ENCODE measurements at regions of chr3 and their contacts with region 1.

Region 1: DNA sequence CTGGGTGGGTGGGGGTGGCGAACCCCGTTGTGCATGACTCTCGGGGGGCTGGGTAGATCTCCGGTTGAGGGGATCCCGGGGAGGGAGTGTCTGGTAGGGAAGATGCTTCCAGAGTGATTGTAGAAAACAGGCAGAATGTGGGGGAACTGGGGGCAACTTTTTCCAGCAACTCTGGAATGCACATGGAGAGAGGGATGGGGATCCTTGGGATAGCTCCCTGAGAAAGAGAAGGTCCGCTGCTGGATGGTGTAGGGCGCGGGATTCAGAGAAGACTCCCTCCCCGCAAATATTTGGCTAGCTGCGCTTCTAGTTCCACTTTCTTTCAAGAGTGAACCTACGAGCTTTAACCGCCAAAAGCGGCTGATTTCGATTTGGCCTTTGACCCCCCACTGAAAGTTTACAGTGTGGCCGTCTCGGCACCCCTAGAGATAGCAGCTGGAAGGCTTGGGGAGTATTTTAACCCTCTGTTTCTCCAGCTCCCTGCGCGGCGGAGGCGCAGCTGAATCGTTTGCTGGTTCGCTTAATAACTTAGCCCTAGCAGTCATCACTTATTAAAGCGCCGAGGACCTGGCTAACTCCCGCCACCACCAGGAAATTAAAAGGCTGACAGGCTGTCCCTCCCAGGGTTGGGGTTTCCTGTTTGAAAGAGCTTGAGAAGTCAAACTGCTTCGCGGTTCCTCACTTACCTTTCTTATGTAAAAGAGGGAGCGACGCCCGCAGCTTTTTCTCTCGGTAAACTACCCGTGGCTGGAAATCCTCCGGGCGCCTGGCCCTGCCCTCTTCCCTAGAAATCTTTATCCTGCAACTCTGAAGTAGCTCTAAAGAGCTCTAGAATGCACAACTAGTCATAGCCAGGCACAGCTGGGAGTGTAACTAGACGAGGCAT is 1.2 kb downstream of the PHLDB2 start:
- DNase-seq: peak; percentile 86 to 96 (median 90)
- H3K4me3 ChIP-seq: peak overlapping the region; percentile 81 to 85 (median 84)
- H3K27ac ChIP-seq: peak overlapping the region; percentile 93 to 97
- H3K4me1 ChIP-seq: peaks cover 0 to 30% (median 15%) of the 10 kb centered on the region in 3 donors
- H3K27me3 ChIP-seq: no peaks in the 10 kb centered on the region
- CTCF ChIP-seq: peak; percentile 48

Region 2: DNA sequence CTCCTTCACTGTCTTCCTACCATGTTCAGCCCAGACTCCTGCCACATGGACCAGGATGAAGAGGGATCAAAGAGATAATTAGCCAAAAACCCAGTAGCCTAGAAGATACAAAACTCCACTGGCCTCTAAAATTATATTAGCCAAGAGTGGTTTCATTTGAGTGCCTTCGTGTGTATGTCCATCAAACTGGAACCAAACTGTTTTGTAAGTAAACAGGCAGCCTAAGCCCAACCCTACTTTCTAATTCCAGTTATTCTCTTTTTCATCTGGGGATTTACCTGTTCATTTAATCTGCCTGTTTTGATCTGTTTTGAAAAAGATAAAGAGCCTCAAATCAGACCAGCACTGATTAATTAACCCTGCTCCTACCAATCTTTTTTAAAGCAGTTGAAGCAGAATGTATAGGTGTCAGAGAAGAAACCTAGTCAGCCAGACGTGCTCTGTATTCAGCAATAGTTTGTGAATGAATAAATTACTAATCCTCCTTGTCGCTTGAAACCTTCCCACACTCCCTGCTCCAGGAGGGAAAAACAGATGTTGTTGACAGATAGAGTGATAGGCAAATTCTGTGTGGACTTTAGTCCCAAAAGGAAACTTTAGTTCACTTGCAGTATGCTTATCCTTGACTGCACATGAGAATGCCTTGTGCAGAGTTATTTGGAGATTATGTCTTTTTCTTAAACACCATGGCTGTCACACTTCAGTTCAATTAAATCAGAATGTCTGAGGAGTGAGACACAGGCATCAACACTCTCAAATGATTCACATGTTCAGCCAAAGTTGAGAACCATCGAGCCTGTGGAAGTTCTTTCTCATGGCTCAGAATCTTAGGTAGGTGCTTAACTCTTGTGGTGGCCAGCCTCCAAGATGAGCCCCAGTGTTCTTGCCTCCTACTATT is 209.6 kb before region 1 on chr3:
- intact Hi-C with region 1: no loop called
- DNase-seq: peak in 2 of 5 donors; percentile 13 to 15
- H3K4me3 ChIP-seq: no peak overlapping the region
- H3K27ac ChIP-seq: no peak overlapping the region
- H3K4me1 ChIP-seq: peaks cover 0 to 5% (median 0%) of the 10 kb centered on the region in 3 donors
- H3K27me3 ChIP-seq: no peaks in the 10 kb centered on the region
- CTCF ChIP-seq: no peak

Region 3: DNA sequence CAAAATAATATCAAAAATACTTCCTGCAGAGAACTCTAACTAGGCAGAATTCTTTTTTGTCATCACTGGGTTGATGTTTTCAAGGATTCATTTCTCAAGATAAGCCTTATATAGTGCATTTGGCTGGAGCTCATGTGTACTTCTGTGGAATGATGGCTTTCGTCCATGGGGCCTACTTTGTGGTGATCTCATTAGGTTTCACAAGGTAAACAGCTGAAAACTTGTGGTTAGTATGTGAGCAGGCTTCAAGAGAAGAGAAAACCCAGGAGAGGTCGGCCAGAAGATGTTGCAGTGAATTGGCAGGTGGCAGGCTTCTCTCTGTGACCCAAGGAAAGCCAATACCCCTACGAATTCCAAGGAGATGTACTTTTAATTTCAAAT is 122.5 kb before region 1 on chr3:
- intact Hi-C with region 1: loop called (anchors 10 kb)
- DNase-seq: no peak
- H3K4me3 ChIP-seq: no peak overlapping the region
- H3K27ac ChIP-seq: peak overlapping the region; percentile 74 to 77
- H3K4me1 ChIP-seq: peaks cover 0 to 49% (median 26%) of the 10 kb centered on the region in 3 donors
- H3K27me3 ChIP-seq: no peaks in the 10 kb centered on the region
- CTCF ChIP-seq: no peak